Activated naive CD4-positive, alpha-beta T cell treated with anti-CD3 and anti-CD28 coated beads for 36 hours (primary cell): ENCODE measurements at regions of chr14 and their contacts with region 1.

Region 1: DNA sequence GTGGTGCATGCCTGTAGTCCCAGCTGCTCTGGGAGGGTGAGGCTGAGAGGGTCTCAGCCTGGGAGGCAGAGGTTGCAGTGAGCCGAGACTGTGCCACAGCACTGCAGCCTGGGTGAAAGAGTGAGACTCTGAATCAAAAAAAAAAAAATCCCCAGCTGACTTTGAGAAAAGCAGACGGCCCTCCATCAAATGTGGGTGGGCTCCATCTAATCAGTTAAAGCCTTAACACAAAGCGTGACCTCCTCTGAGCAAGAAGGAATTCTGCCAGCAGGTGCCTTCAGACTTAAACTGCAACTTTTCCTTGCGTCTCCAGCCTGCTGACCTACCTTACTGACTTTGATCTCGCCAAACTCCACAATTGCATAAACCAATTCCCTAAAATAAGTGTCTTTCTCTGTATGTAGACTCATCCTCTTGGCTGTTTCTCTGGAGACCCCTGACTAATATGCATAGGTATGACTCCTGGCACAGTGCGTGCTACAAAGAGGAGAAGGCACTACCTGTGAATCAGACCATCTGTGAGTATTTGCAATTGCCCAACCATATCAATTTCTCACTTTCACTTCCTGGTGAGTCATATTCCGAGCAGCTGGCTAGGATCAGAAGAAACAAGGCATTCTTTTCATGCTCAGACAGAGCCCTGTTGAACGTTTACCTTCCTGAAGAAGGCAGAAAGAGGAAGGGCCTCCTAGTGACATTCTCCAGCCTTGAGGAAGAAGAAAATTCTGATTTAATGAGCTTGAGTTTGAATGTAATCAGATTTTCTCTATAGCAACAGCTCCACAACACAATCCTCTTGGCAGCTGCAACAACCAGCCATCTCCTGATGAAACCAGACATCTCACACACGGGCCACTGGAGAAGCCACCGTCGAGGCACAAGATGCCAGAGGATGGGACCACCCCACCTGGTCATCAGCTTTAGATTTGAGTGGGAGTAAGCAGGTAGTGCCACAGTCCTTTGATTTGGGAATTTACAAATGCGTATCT is 54.3 kb downstream of the CLMN start:
- DNase-seq: peak; percentile 79
- H3K4me3 Mint-ChIP-seq: no peak overlapping the region
- H3K27ac Mint-ChIP-seq: peak overlapping the region; percentile 56
- H3K4me1 Mint-ChIP-seq: peaks cover 36% of the 10 kb centered on the region
- H3K27me3 Mint-ChIP-seq: no peaks in the 10 kb centered on the region

Region 2: DNA sequence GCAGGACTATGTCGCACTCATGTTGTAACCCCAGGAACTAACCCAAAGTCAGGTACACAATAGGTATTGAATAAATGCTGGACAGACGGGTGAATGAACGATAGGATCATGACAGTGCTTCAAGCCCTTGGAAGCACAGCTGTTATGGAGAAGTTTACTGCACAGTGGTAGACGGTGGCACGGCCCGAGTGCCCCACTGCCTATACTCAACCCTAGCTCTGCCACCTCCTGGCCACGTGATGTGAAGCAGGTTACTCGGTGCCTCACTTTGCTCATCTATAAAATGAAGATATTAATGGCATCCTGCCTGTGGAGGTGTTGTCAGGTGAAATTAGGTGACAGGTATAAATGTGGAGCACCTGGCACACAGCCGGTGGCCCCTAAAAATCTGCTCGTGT is 1294.9 kb before region 1 on chr14:
- CTCF ChIA-PET with region 1: no interaction called
- intact Hi-C with region 1: loop called (anchors 10 kb)
- DNase-seq: peak; percentile 84
- H3K4me3 Mint-ChIP-seq: peak overlapping the region; percentile 71
- H3K27ac Mint-ChIP-seq: peak overlapping the region; percentile 85
- H3K4me1 Mint-ChIP-seq: peaks cover 47% of the 10 kb centered on the region
- H3K27me3 Mint-ChIP-seq: peaks cover 2% of the 10 kb centered on the region

Region 3: DNA sequence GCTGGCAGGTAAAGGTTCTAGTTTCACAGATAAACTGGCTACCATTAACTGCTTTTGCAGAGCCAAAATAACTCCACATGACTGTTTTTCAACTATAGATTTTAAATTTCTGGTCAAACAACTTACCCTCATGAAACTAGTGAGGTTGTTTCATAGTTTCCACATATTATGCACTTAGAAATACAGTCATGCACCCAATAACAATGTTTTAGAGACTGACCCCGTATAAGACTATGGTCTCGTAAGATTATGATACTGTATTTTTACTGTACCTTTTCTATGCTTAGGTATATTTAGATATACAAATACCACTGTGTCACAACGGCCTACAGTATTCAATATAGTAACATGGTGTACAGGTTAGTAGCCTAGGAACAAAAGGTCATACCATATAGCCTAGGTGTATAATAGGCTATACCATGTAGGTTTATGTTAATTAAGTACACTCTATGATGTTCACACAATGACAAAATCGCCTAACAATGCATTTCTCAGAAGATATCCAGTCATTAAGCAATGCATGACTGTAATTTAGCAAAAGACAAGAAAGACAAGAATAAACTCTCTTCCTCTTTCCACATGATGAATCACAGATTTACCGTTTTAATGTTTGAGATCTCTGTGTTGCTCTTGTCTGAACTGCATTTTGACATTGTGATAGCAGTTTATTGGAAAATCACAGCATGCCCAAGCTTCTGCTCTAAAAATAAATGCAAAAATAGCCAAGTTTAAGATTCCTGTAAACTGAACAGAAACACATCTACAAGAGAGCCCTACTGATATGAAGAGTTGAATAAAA is 125.1 kb before region 1 on chr14:
- CTCF ChIA-PET with region 1: no interaction called
- intact Hi-C with region 1: loop called (anchors 1 kb)
- DNase-seq: no peak
- H3K4me3 Mint-ChIP-seq: no peak overlapping the region
- H3K27ac Mint-ChIP-seq: peak overlapping the region; percentile 39
- H3K4me1 Mint-ChIP-seq: peaks cover 71% of the 10 kb centered on the region
- H3K27me3 Mint-ChIP-seq: no peaks in the 10 kb centered on the region

Region 4: GRCh38 chr14:95319312-95320021 is 54.1 kb after region 1 on chr14 and contains the start of gene CLMN:
- CTCF ChIA-PET with region 1: no interaction called
- intact Hi-C with region 1: loop called (anchors 5 kb)
- DNase-seq: peak; percentile 35
- H3K4me3 Mint-ChIP-seq: peak within 1 kb of the TSS; percentile 69
- H3K27ac Mint-ChIP-seq: no peak within 1 kb of the TSS
- H3K4me1 Mint-ChIP-seq: peaks cover 11% of the 10 kb centered on the region
- H3K27me3 Mint-ChIP-seq: peaks cover 22% of the 10 kb centered on the region
- total RNA-seq, gene CLMN: 1.9 to 2.6 TPM

Region 5: GRCh38 chr14:95340201-95340697 is 74.8 kb after region 1 on chr14:
- CTCF ChIA-PET with region 1: no interaction called
- intact Hi-C with region 1: no loop called
- DNase-seq: no peak
- H3K4me3 Mint-ChIP-seq: no peak overlapping the region
- H3K27ac Mint-ChIP-seq: no peak overlapping the region
- H3K4me1 Mint-ChIP-seq: no peaks in the 10 kb centered on the region
- H3K27me3 Mint-ChIP-seq: peaks cover 12% of the 10 kb centered on the region